Cardiac septum (tissue), 1 donor: ENCODE measurements at regions of chr19 and their contacts with region 1.

Region 1: DNA sequence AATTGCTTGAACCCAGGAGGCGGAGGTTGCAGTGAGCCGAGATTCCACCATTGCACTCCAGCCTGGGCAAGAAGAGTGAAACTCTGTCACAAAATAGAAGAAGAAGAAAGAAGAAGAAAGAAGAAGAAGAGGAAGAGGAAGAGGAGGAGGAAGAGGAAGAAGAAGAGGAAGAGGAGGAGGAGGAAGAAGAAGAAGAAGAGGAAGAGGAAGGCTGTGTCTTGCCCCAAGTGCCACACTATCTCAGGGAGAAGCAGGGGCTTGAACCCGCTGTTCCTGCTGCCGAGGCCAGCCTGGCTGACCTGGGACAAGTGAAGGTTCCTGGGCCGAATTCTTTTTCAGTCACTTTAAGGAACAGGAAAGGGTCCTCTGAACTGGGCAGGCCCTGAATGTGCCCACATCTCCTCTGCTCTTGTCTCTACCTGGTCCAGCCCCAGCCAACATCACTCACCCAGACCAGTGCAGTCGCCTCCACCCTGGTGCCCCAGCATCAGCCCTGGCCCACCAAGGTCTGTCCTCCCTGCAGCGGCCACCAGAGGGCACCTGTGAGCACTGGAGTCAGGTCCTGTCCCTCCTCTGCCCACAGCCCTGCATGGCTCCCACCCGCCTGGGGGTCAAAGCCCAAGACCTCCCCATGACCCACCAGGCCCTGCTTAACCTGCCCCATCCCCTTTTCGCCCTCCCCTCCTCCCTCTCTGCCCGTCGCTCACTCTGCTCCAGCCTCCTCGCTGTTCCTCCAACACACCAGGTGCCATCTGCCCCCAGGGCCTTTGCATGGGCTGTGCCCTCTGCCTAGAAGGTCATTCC is 20.0 kb downstream of the TICAM1 start:
- DNase-seq: peak; percentile 86

Region 2: DNA sequence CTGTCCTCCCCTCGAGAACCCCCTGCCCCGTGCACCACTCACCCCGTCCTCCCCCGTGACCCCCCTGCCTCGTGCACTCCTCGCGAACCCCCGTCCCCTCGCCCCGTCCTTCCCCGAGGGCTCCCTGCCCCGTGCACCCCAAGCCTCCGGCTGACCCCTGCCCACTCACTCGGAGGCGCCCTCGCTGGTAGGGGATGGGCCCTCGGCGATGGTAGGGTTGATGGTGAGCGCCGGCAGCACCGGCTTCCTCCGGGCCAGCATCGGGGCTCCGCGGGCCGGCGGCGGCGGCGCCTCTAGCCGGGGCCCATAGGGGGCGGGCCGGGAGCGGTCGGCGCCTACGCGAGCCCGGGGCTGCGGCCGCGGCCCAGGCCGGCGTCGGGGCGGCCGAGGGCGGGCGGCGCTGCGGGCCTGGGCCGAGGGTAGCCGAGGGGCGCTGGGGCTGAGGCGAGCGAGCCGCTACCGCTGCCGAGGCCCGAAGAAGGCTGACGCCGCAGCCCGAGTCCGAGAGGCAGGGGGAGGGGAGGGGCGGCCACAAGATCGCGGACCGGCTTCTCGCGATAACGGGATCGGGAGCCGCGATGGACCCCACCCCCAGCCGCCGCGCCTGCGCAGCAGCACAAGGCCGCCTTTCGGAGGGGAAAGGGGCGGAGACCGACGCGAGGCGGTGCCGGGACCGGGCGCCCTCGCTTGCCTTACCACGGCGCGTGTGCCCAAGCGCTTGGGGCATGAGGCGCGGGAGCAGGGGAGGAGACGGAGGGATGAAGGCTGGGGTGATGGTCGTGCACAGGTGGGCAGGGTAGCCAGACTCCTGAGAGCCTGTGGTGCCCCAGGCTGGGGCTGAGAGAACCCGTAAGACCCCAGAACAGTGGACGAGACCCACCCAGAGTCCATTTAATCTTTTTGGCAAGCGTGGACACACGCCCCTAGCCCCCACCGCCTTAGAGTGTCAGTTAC is 687.6 kb before region 1 on chr19 and contains the start of gene MAP2K2:
- intact Hi-C with region 1: no loop called
- DNase-seq: peak; percentile 98
- total RNA-seq, gene MAP2K2: 107 TPM

Region 3: DNA sequence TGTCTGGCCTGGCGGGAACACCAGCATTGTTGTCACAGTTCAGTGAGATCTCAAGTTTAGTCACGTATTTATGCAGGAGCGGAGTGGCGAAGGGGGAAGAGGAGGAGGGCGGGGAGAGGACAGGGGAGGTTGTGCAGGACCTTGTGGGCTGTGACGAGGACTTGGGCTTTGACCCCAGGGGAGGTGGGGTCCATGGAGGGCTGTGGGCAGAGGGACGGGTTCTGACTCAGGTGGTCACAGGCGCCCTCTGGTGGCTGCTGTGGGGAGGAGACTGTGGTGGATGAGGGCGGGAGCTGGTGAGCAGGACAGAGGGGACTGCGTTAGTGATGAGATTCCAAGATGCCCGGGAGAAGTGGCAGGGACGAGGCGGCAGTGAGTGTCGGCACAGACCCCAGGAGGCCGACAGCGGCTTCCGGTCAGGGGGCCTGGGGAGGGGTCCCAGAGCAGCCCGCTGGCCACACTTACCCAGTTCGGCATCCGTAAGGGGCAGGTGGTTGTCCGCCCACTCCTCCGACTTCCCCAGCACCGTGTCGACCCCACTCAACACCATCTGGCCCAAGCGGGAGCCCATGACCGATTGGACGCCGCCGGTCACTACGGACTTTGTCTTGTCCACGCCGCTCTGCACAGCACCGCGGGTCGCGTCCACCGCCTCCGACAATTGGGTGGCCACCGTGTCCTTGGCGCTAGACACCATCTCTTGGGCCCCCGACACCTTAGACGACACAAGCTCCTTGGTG is 40.2 kb after region 1 on chr19:
- intact Hi-C with region 1: loop called (anchors 1 kb)
- DNase-seq: peak; percentile 80

Region 4: GRCh38 chr19:4867534-4868285 is 56.2 kb after region 1 on chr19 and contains the start of gene PLIN3:
- intact Hi-C with region 1: loop called (anchors 5 kb)
- DNase-seq: peak; percentile 99
- total RNA-seq, gene PLIN3: 21.7 TPM

Region 5: GRCh38 chr19:4889034-4889815 is 77.7 kb after region 1 on chr19:
- intact Hi-C with region 1: no loop called
- DNase-seq: no peak

Region 6: GRCh38 chr19:4909897-4910593 is 98.5 kb after region 1 on chr19:
- intact Hi-C with region 1: loop called (anchors 5 kb)
- DNase-seq: peak; percentile 95

Region 7: DNA sequence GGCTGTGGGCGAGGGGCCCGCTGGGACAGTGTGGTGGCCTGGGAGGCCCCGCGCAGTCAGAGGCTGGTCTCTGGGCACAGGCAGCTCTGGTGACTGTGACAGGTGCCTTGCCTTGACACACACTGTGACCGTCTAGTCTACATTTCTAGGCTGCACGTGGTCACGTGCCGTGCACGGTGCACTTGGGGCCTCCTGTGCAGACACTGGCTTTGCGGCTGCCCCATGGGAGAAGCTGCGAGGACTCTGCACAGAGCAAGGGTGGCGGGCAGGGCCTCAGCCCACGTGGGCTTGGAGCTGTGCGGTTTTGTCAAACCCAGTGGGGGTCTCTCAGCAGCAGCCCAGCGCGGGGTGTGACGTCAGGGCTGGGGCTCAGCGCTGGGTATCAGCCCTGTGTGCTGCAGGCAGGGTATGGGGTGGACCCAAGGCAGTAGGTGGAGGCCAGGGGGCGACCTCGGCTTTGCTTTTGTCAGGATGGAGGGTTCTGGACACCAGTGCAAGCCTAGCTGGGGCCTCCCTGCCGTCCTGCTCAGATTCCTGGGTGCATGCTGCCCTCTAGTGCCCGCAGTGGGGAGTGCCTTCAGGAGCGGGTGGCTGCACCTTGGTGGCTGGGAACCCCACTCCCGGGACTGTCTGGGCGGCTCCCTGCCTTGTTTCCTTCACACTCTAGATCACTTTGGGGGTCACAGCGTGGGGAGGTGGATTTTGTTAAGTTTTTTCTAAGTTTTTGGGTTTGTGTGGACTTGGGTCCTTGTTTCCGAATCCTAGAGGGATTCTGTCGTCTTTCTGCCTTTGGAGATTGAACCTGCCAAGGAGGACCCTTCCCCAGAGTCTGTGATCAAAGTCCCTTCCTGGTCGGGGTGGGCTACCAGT is 219.9 kb after region 1 on chr19:
- intact Hi-C with region 1: loop called (anchors 2 kb)
- DNase-seq: peak; percentile 90